ENCODE measurements at regions of chr4 and their contacts with region 1.

Region 1: GRCh38 chr4:75025431-75025830 is 92.5 kb downstream of the PARM1 start:
- DNase-seq: no peak
- ATAC-seq: no peak
- H3K4me3 ChIP-seq: no peak overlapping the region
- H3K4me3 Mint-ChIP-seq: no peak overlapping the region
- H3K27ac ChIP-seq: no peak overlapping the region
- H3K27ac Mint-ChIP-seq: no peak overlapping the region
- H3K4me1 ChIP-seq: no peaks in the 10 kb centered on the region
- H3K4me1 Mint-ChIP-seq: no peaks in the 10 kb centered on the region
- H3K27me3 ChIP-seq: no peaks in the 10 kb centered on the region
- H3K27me3 Mint-ChIP-seq: peaks cover 5 to 6% of the 10 kb centered on the region in 2 donors

Region 2: DNA sequence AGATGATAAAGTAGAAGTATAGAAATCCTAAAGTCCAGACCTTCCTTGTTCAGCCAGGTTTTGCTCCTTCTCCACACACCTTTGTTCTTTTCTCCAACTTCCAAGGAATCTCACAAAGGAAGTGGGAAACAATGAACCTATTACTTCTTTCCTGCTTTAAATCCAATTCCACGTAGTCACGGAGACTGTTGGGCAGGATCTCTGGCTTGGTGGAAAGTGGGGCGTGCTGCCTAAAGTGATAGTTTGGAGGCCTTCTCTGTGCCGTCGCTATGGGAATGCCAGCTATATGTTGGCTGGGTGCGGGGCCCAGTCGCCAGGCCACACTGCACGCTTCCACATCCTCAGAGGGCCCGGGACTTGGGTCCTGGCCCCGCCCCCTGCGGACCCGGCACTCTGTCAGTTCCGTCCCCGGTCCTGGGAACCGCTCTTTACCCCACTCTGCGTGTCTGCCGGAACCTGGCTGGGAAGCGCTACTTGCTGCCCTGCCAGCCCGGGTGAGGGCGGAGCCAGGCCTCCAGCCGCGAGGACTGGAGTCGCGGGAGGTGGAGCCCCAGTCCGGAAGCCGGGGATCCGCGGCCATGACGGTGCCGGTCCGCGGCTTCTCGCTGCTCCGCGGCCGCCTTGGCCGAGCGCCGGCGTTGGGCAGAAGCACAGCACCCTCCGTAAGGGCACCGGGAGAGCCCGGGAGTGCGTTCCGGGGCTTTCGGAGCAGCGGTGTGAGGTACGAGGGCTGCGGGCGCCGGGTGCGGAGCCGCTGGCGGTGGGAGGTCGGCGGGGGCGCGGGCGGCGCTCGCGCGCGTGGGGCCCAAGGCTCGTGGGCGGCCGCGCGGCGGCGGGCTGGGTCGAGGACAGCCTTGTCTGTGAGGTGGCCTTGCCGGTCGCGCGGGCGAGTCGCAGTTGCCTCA is 867.6 kb before region 1 on chr4 and contains the start of gene MTHFD2L:
- CTCF ChIA-PET with region 1: no interaction called
- POLR2A ChIA-PET with region 1: no interaction called
- DNase-seq: peak; percentile 56 to 84 (median 70)
- ATAC-seq: peak; percentile 96 to 98 (median 97)
- H3K4me3 ChIP-seq: peak within 1 kb of the TSS; percentile 81 to 91
- H3K4me3 Mint-ChIP-seq: peak within 1 kb of the TSS; percentile 87 to 89 (median 89)
- H3K27ac ChIP-seq: peak within 1 kb of the TSS; percentile 65
- H3K27ac Mint-ChIP-seq: peak within 1 kb of the TSS; percentile 36 to 90
- H3K4me1 ChIP-seq: peaks cover 13 to 14% of the 10 kb centered on the region in 2 experiments
- H3K4me1 Mint-ChIP-seq: peaks cover 14 to 29% (median 27%) of the 10 kb centered on the region in 3 donors
- H3K27me3 ChIP-seq: peaks cover 0 to 3% of the 10 kb centered on the region in 2 experiments
- H3K27me3 Mint-ChIP-seq: no peaks in the 10 kb centered on the region
- total RNA-seq, gene MTHFD2L: 7.2 to 9.8 (median 7.9) TPM

Region 3: DNA sequence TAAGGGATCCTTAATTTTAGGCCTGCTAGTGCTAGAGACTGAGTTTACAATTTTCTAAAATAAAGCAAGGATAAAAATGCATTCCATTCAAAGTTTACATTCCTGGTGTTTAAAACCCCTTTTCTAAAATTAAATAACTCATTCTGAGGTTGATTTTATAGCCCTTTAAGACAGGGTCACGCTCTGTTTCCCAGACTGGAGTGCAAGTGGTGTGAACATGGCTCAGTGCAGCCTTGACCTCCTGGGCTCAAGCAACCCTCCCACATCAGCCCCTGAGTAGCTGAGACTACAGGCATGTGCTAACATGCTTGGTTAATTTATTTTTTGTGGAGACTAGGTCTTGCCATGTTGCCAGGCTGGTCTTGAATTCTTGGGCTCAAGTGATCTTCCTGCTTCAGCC is 611.7 kb after region 1 on chr4:
- CTCF ChIA-PET with region 1: interaction called in 1 of 2 experiments, 11 read pairs
- POLR2A ChIA-PET with region 1: no interaction called
- DNase-seq: no peak
- ATAC-seq: no peak
- H3K4me3 ChIP-seq: no peak overlapping the region
- H3K4me3 Mint-ChIP-seq: no peak overlapping the region
- H3K27ac ChIP-seq: no peak overlapping the region
- H3K27ac Mint-ChIP-seq: no peak overlapping the region
- H3K4me1 ChIP-seq: no peaks in the 10 kb centered on the region
- H3K4me1 Mint-ChIP-seq: peaks cover 0 to 17% (median 0%) of the 10 kb centered on the region in 3 donors
- H3K27me3 ChIP-seq: no peaks in the 10 kb centered on the region
- H3K27me3 Mint-ChIP-seq: no peaks in the 10 kb centered on the region